Sigmoid colon (tissue), 7 donors: ENCODE measurements at regions of chr7 and their contacts with region 1.

Region 1: DNA sequence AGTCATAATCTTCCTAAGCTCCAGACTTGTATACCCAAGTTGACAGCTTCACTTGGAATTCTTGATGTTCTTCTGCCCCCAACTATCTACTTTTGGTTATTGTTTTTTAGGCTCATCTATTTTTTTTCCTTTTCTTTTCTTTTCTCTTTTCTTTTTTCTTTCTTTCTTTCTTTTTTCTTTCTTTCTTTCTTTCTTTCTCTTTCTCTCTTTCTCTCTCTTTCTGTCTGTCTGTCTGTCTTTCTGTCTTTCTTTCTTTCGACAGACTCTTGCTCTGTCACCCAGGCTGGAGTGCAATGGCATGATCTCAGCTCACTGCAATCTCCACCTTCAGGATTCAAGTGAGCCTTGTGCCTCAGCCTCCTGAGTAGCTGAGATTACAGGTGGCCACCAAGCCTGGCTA is 36.5 kb downstream of the KMT2E start:
- DNase-seq: no peak
- H3K4me3 ChIP-seq: no peak overlapping the region
- H3K27ac ChIP-seq: no peak overlapping the region
- H3K4me1 ChIP-seq: peaks cover 0 to 51% (median 38%) of the 10 kb centered on the region in 4 donors
- H3K27me3 ChIP-seq: no peaks in the 10 kb centered on the region
- CTCF ChIP-seq: no peak
- EP300 ChIP-seq: no peak
- POLR2A ChIP-seq: no peak

Region 2: GRCh38 chr7:104252404-104253134 is 797.9 kb before region 1 on chr7:
- intact Hi-C with region 1: no loop called
- DNase-seq: no peak
- H3K4me3 ChIP-seq: no peak overlapping the region
- H3K27ac ChIP-seq: no peak overlapping the region
- H3K4me1 ChIP-seq: no peaks in the 10 kb centered on the region
- H3K27me3 ChIP-seq: no peaks in the 10 kb centered on the region
- CTCF ChIP-seq: no peak
- EP300 ChIP-seq: no peak
- POLR2A ChIP-seq: no peak

Region 3: DNA sequence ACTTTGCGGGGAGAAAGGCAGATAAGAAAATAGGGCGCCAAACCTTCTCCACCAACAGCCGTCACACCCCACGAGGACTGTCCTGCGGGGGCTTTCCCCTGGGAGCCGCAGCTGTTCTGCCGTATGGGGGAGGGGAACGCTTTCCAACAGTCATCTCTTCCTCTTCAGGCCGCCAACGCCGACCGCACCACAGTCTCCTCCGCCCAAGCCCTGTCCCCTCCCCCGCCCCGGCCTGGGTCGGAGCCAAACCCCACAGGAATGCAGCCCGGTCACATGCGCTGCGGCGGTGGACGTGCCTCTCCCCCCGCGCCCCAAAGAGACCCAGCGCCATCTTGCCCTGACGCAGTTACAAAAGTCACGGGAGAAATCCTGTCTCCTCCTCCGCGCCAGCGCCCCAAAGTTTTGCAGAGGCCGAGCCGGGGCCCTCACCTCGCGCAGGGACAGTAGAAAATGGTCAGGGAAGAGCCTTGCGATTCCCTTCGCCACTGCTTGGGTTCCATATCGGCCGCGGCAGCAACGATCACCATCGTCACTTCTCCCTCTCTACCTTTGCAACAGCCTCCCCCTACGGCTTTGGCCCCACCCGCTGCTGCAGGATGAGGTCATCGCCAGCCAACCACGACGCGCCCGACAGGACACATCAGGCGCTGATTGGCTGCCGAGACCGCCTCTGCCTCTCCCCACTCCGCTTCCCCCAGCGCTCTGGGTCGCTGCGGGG is 37.8 kb before region 1 on chr7:
- intact Hi-C with region 1: loop called (anchors 5 kb)
- DNase-seq: peak; percentile 100
- H3K4me3 ChIP-seq: peak overlapping the region; percentile 76 to 97 (median 86)
- H3K27ac ChIP-seq: peak overlapping the region; percentile 98 to 99 (median 98)
- H3K4me1 ChIP-seq: peaks cover 0 to 52% (median 41%) of the 10 kb centered on the region in 4 donors
- H3K27me3 ChIP-seq: no peaks in the 10 kb centered on the region
- CTCF ChIP-seq: no peak
- EP300 ChIP-seq: peak in 2 of 4 donors; percentile 81 to 91
- POLR2A ChIP-seq: peak; percentile 53 to 72

Region 4: GRCh38 chr7:105315357-105315756 is 264.9 kb after region 1 on chr7:
- intact Hi-C with region 1: no loop called
- DNase-seq: no peak
- H3K4me3 ChIP-seq: no peak overlapping the region
- H3K27ac ChIP-seq: no peak overlapping the region
- H3K4me1 ChIP-seq: peaks cover 0 to 9% (median 0%) of the 10 kb centered on the region in 4 donors
- H3K27me3 ChIP-seq: no peaks in the 10 kb centered on the region
- CTCF ChIP-seq: no peak
- EP300 ChIP-seq: no peak
- POLR2A ChIP-seq: no peak

Region 5: GRCh38 chr7:105354388-105354787 is 303.9 kb after region 1 on chr7:
- intact Hi-C with region 1: no loop called
- DNase-seq: no peak
- H3K4me3 ChIP-seq: no peak overlapping the region
- H3K27ac ChIP-seq: peak overlapping the region in 2 of 4 donors; percentile 2 to 19
- H3K4me1 ChIP-seq: peaks cover 0 to 43% (median 39%) of the 10 kb centered on the region in 4 donors
- H3K27me3 ChIP-seq: no peaks in the 10 kb centered on the region
- CTCF ChIP-seq: no peak
- EP300 ChIP-seq: no peak
- POLR2A ChIP-seq: no peak